Heart right ventricle (tissue), 16 donors: ENCODE measurements at regions of chr12 and their contacts with region 1.

Region 1: DNA sequence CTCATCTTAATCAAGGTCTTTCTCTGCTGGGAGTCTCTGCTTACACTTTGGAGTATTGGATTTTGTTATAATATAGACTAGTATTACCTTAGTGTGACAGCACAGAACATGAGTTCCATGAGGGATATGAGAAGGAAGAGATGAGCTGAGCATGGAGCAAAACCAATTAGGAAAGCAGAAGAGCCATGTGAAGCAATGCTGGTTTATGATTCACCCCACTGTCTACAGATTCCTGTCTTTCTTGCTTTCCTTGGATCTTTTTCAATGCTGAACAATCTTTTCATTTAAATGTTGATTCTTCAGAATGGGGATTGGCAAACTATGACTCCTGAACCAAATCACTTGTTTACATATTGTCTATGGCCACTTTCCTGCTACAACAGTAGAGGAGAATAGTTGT is 70.4 kb upstream of the KITLG start:
- DNase-seq: no peak
- ATAC-seq: no peak
- H3K4me3 ChIP-seq: no peak overlapping the region
- H3K27ac ChIP-seq: no peak overlapping the region
- H3K4me1 ChIP-seq: peaks cover 0 to 9% (median 0%) of the 10 kb centered on the region in 9 donors
- H3K27me3 ChIP-seq: no peaks in the 10 kb centered on the region
- CTCF ChIP-seq: no peak

Region 2: GRCh38 chr12:88985475-88986030 is 334.8 kb after region 1 on chr12:
- intact Hi-C with region 1: loop called in 1 of 10 experiments (anchors 10 kb)
- DNase-seq: no peak
- ATAC-seq: no peak
- H3K4me3 ChIP-seq: no peak overlapping the region
- H3K27ac ChIP-seq: peak overlapping the region in 2 of 10 donors; percentile 43 to 48
- H3K4me1 ChIP-seq: peaks cover 0 to 20% (median 8%) of the 10 kb centered on the region in 9 donors
- H3K27me3 ChIP-seq: peaks cover 0 to 3% (median 0%) of the 10 kb centered on the region in 7 donors
- CTCF ChIP-seq: no peak

Region 3: DNA sequence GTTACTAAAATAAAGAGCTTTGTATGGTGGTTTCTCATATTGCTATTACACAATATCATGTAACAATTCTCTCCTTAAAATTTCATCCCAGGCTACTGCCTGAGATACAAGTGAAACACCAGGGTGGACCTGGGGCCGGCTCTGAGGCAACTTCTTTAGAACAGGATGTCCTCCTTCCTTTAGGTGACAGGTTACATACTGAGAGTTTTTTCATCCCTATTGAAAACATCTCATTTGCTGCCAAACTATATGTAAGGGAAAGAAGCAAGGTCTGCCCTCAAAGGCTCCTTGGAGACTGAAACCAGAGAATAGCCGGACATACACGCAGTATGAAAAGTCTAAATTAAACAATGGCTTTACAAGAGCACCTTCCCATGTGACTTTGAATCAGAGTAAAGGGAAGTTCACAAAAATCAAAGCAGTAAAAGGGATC is 561.6 kb after region 1 on chr12:
- intact Hi-C with region 1: no loop called
- DNase-seq: peak; percentile 32 to 43
- ATAC-seq: peak; percentile 77 to 96 (median 95)
- H3K4me3 ChIP-seq: no peak overlapping the region
- H3K27ac ChIP-seq: peak overlapping the region; percentile 4 to 86 (median 57)
- H3K4me1 ChIP-seq: peaks cover 0 to 49% (median 12%) of the 10 kb centered on the region in 9 donors
- H3K27me3 ChIP-seq: no peaks in the 10 kb centered on the region
- CTCF ChIP-seq: no peak